ENCODE measurements at regions of chr5 and their contacts with region 1.

Region 1: DNA sequence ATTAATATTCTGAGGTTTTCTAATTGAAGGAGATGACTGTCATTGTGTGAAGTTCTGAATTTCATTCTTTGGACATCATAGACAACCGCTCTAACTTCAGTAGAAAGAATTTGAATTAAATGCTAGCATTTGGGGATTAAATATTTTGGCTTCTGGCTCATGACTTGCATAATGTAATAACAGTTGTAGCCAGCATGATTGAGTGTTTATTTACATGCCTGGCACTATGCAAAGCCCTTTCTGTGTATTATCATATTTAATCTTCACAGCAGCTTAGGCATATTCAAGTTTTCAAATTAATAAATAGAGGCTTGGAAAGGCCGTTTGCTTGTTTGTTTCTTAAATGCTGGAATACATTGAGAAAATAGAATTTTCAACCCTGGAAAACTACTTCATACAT is 19.6 kb upstream of the HTR1A start:
- DNase-seq: no peak

Region 2: GRCh38 chr5:62896121-62896893 is 1085.6 kb before region 1 on chr5:
- intact Hi-C with region 1: no loop called
- DNase-seq: no peak

Region 3: DNA sequence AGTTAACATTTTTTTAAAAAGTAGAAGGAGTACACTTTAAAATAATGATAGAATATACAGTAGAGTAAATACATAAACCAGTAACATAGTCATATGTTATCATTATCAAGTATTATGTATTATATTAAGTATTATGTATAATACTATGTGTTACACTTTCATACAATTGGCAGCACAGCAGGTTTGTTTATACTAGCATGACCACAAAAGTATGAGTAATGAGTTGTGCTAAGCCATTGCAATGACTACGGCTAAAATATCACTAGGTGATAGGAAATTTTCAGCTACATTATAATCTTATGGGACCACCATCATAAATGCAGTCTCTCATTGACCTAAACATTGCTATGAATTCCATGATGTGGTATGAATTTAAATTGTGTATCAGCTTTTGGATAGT is 525.6 kb before region 1 on chr5:
- intact Hi-C with region 1: no loop called
- DNase-seq: no peak

Region 4: DNA sequence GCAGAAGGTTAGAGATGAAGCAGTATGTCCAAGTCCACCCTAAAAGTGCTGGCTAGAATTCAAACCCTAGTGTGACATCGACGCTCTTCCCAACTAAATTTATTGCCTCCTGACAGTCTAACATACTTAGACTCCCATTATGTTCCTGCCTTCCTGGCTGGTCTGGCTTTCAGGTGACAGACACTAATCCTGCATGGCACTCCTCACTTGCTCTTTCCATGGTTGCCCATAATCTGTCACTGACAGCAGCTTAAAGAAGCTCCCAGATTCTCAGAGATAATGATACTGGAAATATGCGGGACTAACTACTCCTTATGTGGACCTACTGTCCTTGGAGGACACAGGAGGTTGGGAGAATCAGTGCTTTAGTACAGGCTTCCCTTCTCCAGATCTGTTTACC is 22.1 kb after region 1 on chr5:
- intact Hi-C with region 1: loop called in 1 of 2 experiments (anchors 2 kb)
- DNase-seq: no peak

Region 5: DNA sequence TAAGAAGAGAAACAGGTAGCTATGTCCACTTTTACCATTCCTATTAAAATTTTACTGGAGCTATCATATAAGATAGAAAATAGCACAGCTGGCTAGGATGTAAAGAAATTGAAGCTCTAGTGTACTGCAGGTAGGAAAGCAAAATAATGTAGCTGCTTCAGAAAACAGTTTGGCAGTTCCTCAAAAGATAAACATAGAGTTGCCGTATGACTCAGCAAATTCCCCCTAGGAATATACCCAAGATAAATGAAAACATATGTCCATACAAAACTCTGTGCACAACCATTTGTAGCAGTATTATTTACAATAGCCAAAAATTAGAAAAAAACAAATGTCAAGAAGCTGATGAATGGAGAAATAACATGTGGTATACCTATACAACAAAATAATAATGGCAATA is 643.8 kb after region 1 on chr5:
- intact Hi-C with region 1: no loop called
- DNase-seq: no peak

Measured in posterior vena cava (tissue), 2 donors.